ENCODE measurements at regions of chr15 and their contacts with region 1.

Region 1: GRCh38 chr15:95247099-95247984 is 1016.0 kb downstream of the MCTP2 start:
- DNase-seq: no peak
- H3K4me3 ChIP-seq: no peak overlapping the region
- H3K27ac ChIP-seq: no peak overlapping the region
- H3K4me1 ChIP-seq: no peaks in the 10 kb centered on the region
- H3K27me3 ChIP-seq: no peaks in the 10 kb centered on the region
- CTCF ChIP-seq: no peak
- POLR2A ChIP-seq: no peak

Region 2: DNA sequence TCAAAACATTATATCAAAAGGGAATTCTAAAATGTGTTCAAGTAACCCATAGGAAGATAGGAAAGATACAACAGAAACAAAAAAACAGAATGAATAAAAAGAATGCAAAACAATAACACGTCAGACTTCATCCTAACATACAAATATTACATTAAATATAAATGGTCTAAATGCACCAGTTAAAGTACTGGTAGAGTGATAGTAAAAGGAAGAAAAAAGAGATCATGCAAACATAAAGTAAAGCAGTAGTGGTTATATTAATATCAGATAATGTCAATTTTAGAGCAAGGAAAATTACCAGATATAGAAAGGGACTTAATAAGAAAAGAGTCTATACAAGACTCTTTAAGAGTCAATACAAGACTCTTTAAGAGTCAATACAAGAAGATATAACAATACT is 260.3 kb before region 1 on chr15:
- intact Hi-C with region 1: loop called (anchors 2 kb)
- DNase-seq: no peak
- H3K4me3 ChIP-seq: no peak overlapping the region
- H3K27ac ChIP-seq: no peak overlapping the region
- H3K4me1 ChIP-seq: no peaks in the 10 kb centered on the region
- H3K27me3 ChIP-seq: no peaks in the 10 kb centered on the region
- CTCF ChIP-seq: no peak
- POLR2A ChIP-seq: no peak